CD8-positive, alpha-beta memory T cell (primary cell): ENCODE measurements at regions of chr15 and their contacts with region 1.

Region 1: DNA sequence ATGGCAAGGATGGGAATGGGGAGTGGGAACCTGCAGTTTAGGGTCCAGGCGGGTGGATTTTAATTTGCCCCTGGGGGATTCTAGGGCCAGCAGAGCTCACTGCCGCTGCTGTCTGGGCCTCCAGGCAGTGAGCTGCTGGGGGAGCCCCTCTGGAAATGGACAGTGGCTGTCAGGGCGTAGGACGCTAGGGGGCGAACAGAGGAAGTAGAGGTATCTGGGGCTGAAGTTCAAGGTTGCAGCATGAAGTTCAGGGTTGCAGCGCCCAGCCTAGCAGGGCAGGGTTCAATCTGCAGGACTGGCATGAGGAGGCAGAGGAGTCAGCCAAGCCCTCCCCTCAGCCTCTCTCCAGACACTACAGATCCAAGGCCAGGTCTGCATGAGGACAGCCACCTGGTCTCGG is 49.6 kb downstream of the APBA2 start:
- DNase-seq: peak in 4 of 5 donors; percentile 12 to 77 (median 50)
- H3K4me3 ChIP-seq: no peak overlapping the region
- H3K4me3 Mint-ChIP-seq: peak overlapping the region in 5 of 7 donors; percentile 4 to 81 (median 66)
- H3K27ac ChIP-seq: no peak overlapping the region
- H3K27ac Mint-ChIP-seq: peak overlapping the region in 6 of 8 donors; percentile 1 to 93 (median 78)
- H3K4me1 ChIP-seq: peaks cover 73% of the 10 kb centered on the region
- H3K4me1 Mint-ChIP-seq: peaks cover 47 to 82% (median 61%) of the 10 kb centered on the region in 3 donors
- H3K27me3 ChIP-seq: no peaks in the 10 kb centered on the region
- H3K27me3 Mint-ChIP-seq: peaks cover 0 to 4% of the 10 kb centered on the region in 2 donors

Region 2: DNA sequence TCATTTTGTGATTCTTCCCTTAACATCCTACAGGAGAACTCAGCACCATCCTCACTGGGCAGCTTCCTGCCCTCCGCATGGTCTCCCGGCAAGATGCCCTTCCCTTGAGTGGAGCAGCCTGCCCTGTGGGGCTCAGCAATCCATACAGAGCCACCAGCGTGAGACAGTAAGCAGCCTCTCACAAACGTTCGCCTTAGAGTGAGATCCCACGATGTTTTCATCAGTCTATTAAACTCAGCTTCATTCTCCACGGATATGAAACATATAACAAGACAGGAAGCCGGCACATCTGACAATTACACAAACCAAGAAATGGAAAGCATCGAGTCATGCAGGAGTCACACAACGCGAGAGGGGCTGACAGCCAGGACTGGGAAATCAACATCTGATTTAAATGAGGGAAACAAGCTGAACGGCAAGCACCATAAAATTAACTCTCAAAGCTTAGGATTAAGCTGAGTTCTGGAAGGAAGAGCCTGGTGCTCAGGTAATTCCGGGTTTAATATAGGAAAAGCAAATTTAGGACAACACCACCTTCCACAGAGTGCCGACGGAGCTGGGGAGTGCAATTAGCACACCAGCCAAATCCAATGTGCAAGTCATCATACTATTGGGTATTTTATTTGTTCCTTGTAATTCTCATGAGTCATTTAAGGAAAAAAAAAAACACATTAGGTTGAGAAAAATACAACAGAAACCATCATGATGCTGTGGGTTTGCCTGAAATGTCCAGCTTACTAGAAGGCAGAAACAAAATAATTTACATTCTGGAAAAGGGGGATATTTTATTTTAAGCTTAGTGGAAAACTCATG is 1108.2 kb before region 1 on chr15:
- CTCF ChIA-PET with region 1: no interaction called
- POLR2A ChIA-PET with region 1: no interaction called
- DNase-seq: no peak
- H3K4me3 ChIP-seq: no peak overlapping the region
- H3K4me3 Mint-ChIP-seq: no peak overlapping the region
- H3K27ac ChIP-seq: no peak overlapping the region
- H3K27ac Mint-ChIP-seq: no peak overlapping the region
- H3K4me1 ChIP-seq: no peaks in the 10 kb centered on the region
- H3K4me1 Mint-ChIP-seq: no peaks in the 10 kb centered on the region
- H3K27me3 ChIP-seq: no peaks in the 10 kb centered on the region
- H3K27me3 Mint-ChIP-seq: peaks cover 0 to 2% of the 10 kb centered on the region in 2 donors

Region 3: GRCh38 chr15:28947221-28947674 is 11.9 kb after region 1 on chr15:
- CTCF ChIA-PET with region 1: interaction called, 10 read pairs
- POLR2A ChIA-PET with region 1: interaction called, 7 read pairs
- DNase-seq: no peak
- H3K4me3 ChIP-seq: no peak overlapping the region
- H3K4me3 Mint-ChIP-seq: peak overlapping the region in 2 of 7 donors; percentile 1 to 40
- H3K27ac ChIP-seq: no peak overlapping the region
- H3K27ac Mint-ChIP-seq: peak overlapping the region in 5 of 8 donors; percentile 58 to 94 (median 68)
- H3K4me1 ChIP-seq: peaks cover 59% of the 10 kb centered on the region
- H3K4me1 Mint-ChIP-seq: peaks cover 49 to 89% (median 60%) of the 10 kb centered on the region in 3 donors
- H3K27me3 ChIP-seq: no peaks in the 10 kb centered on the region
- H3K27me3 Mint-ChIP-seq: no peaks in the 10 kb centered on the region

Region 4: GRCh38 chr15:28955160-28956008 is 20.1 kb after region 1 on chr15:
- CTCF ChIA-PET with region 1: interaction called, 31 read pairs
- POLR2A ChIA-PET with region 1: no interaction called
- DNase-seq: peak in 3 of 5 donors; percentile 16 to 61 (median 48)
- H3K4me3 ChIP-seq: no peak overlapping the region
- H3K4me3 Mint-ChIP-seq: peak overlapping the region in 6 of 7 donors; percentile 62 to 83 (median 76)
- H3K27ac ChIP-seq: peak overlapping the region; percentile 60
- H3K27ac Mint-ChIP-seq: peak overlapping the region; percentile 38 to 94 (median 80)
- H3K4me1 ChIP-seq: peaks cover 36% of the 10 kb centered on the region
- H3K4me1 Mint-ChIP-seq: peaks cover 47 to 85% (median 54%) of the 10 kb centered on the region in 3 donors
- H3K27me3 ChIP-seq: no peaks in the 10 kb centered on the region
- H3K27me3 Mint-ChIP-seq: peaks cover 0 to 3% of the 10 kb centered on the region in 2 donors